Panc1 (cell line): ENCODE measurements at regions of chr2 and their contacts with region 1.

Region 1: GRCh38 chr2:222707689-222708525 is 36.4 kb downstream of the MOGAT1 start:
- DNase-seq: no peak
- ATAC-seq: peak; percentile 77
- H3K4me3 ChIP-seq: peak overlapping the region in 1 of 2 experiments; percentile 14; a peak in 1 of 4 replicates
- H3K27ac ChIP-seq: no peak overlapping the region
- H3K4me1 ChIP-seq: peaks cover 2% of the 10 kb centered on the region; the same call in 1 of the 2 replicates
- H3K27me3 ChIP-seq: no peaks in the 10 kb centered on the region
- CTCF ChIP-seq: peak; percentile 96

Region 2: DNA sequence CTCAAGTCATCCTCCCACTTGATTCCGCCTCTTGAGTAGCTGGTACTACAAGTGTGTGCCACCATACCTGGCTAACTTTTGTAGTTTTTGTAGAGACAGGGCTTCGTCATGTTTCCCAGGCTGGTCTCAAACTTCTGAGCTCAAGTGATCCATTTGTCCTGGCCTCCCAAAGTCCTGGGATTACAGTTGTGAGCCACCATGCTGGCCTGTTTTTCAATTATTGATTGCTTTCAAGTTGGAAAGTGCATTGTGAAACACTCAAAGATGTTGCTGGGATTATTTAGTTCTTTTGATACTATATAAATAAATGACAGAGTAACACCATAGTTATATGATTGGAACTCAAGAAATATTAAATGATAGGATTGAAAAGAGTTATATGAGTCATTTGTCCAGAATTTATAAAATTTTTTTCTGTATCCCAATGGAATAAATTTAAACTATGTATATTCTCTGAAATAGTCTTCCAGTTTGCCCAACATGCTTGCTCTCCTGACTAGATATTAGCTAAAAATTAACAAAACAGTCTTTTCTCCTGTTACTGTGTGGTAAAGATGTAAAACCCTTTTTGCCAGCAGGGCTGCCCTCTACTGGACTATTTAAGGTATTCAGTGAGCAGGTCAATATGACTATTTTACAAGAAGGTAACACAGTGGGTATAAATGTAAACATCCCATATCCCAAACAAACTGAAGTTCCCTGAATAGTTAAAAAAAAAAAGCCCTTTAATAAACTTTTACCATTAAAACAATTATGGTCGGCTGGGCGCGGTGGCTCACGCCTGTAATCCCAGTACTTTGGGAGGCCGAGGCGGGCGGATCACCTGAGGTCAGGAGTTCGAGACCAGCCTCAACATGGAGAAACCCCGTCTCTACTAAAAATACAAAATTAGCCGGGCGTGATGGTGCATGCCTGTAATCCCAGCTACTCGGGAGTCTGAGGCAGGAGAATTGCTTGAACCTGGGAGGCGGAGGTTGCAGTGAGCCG is 195.6 kb after region 1 on chr2:
- CTCF ChIA-PET with region 1: interaction called, 6 read pairs
- POLR2A ChIA-PET with region 1: interaction called, 3 read pairs
- in situ Hi-C with region 1: no loop called
- intact Hi-C with region 1: loop called (anchors 1 kb)
- DNase-seq: no peak
- ATAC-seq: peak; percentile 81
- H3K4me3 ChIP-seq: no peak overlapping the region
- H3K27ac ChIP-seq: no peak overlapping the region
- H3K4me1 ChIP-seq: peaks cover 16% of the 10 kb centered on the region
- H3K27me3 ChIP-seq: no peaks in the 10 kb centered on the region
- CTCF ChIP-seq: peak; percentile 80

Region 3: GRCh38 chr2:222939208-222939856 is 231.4 kb after region 1 on chr2:
- CTCF ChIA-PET with region 1: interaction called, 5 read pairs
- POLR2A ChIA-PET with region 1: interaction called, 5 read pairs
- in situ Hi-C with region 1: no loop called
- intact Hi-C with region 1: loop called (anchors 1 kb)
- DNase-seq: peak; percentile 60
- ATAC-seq: peak; percentile 97
- H3K4me3 ChIP-seq: no peak overlapping the region
- H3K27ac ChIP-seq: no peak overlapping the region
- H3K4me1 ChIP-seq: no peaks in the 10 kb centered on the region
- H3K27me3 ChIP-seq: no peaks in the 10 kb centered on the region
- CTCF ChIP-seq: peak; percentile 93

Region 4: DNA sequence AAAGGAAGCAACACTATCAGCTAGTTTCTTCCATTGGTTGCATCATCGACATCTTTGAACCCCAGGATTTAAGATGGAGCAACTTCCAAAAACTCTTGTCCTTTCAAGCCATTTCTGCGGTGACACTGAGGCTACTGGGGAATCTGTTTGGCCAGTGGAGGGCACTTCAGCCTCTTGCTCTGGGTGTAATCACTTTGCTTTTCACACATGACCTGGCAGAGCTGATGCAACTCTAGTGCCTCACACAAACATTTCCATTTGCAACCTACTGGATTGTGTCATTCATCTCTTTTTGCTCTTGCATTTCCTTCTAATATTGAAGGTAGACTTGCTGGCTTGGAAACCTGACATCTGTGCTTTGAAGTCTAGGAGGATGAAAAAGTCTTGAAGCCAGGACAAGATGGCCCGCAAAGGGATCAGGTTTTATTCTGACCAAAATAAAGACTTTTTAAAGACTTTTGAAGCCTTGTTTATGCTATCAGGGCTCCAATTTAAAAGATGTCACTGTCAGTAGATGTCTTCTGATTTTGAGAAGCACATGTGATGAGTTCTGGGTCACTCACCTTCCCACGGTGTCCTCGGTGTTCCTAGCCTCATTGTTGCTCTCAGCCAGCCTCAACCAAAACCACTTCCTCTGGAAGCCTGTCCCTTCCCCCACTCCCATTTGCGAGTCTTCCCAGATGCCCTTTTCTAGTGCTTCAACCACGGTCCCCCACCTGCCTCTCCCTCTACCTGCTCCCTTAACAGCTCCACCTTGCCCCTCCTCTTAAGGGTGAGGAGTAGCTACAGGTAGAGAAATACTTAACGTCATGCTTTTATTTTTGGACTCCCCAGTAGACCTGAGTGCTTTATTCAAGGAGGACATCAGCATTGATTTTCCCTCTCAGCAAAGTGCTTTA is 274.4 kb after region 1 on chr2:
- CTCF ChIA-PET with region 1: no interaction called
- POLR2A ChIA-PET with region 1: no interaction called
- in situ Hi-C with region 1: no loop called
- intact Hi-C with region 1: no loop called
- DNase-seq: peak; percentile 10
- ATAC-seq: no peak
- H3K4me3 ChIP-seq: no peak overlapping the region
- H3K27ac ChIP-seq: no peak overlapping the region; the same call in 1 of the 2 replicates
- H3K4me1 ChIP-seq: no peaks in the 10 kb centered on the region
- H3K27me3 ChIP-seq: no peaks in the 10 kb centered on the region
- CTCF ChIP-seq: peak; percentile 54

Region 5: GRCh38 chr2:224628416-224628815 is 1920.5 kb after region 1 on chr2:
- CTCF ChIA-PET with region 1: interaction called, 13 read pairs
- POLR2A ChIA-PET with region 1: no interaction called
- in situ Hi-C with region 1: no loop called
- intact Hi-C with region 1: no loop called
- DNase-seq: no peak
- ATAC-seq: no peak
- H3K4me3 ChIP-seq: no peak overlapping the region
- H3K27ac ChIP-seq: no peak overlapping the region
- H3K4me1 ChIP-seq: no peaks in the 10 kb centered on the region
- H3K27me3 ChIP-seq: no peaks in the 10 kb centered on the region
- CTCF ChIP-seq: no peak